CD14-positive monocyte (primary cell): ENCODE measurements at regions of chr18 and their contacts with region 1.

Region 1: DNA sequence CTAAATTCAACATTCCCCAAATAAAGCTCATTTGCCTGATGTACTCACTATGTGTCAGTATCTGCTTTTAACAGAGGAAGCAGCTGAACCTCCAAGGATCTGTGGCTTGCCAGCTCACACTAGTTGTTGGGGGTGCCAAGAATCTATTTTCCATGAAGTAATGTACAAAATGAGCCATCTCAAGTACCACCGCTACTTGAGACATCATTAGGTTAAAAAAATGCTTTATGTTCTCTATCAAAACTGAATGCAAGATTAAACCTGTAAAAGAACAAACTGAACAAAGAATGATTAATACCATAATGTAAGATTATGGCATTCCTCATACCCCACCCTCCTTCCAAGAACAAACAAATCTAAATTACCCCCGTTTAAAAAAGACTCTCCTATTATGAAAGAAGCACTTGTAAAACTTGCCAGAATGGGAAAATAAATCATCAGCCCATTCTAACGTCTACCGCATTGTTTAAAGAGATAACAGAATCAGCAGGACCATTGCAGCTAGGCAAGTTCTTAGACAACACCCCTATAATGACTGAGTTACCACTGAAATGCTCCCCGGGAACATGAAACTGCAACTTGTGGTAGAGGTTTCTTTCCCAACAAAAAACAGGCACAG is 471.6 kb downstream of the DLGAP1 start:
- DNase-seq: no peak
- H3K4me3 ChIP-seq: no peak overlapping the region
- H3K4me3 Mint-ChIP-seq: no peak overlapping the region
- H3K27ac ChIP-seq: no peak overlapping the region
- H3K27ac Mint-ChIP-seq: no peak overlapping the region
- H3K4me1 ChIP-seq: no peaks in the 10 kb centered on the region
- H3K4me1 Mint-ChIP-seq: peaks cover 5% of the 10 kb centered on the region
- H3K27me3 ChIP-seq: no peaks in the 10 kb centered on the region
- H3K27me3 Mint-ChIP-seq: peaks cover 0 to 3% (median 3%) of the 10 kb centered on the region in 3 donors
- CTCF ChIP-seq: no peak

Region 2: GRCh38 chr18:3585656-3586509 is 397.6 kb before region 1 on chr18:
- intact Hi-C with region 1: no loop called
- DNase-seq: peak; percentile 71 to 83 (median 83)
- H3K4me3 ChIP-seq: no peak overlapping the region
- H3K4me3 Mint-ChIP-seq: no peak overlapping the region
- H3K27ac ChIP-seq: no peak overlapping the region
- H3K27ac Mint-ChIP-seq: peak overlapping the region in 2 of 7 donors; percentile 1 to 46
- H3K4me1 ChIP-seq: peaks cover 5 to 14% of the 10 kb centered on the region in 2 donors
- H3K4me1 Mint-ChIP-seq: peaks cover 19% of the 10 kb centered on the region
- H3K27me3 ChIP-seq: no peaks in the 10 kb centered on the region
- H3K27me3 Mint-ChIP-seq: peaks cover 0 to 4% (median 4%) of the 10 kb centered on the region in 3 donors
- CTCF ChIP-seq: peak; percentile 86

Region 3: DNA sequence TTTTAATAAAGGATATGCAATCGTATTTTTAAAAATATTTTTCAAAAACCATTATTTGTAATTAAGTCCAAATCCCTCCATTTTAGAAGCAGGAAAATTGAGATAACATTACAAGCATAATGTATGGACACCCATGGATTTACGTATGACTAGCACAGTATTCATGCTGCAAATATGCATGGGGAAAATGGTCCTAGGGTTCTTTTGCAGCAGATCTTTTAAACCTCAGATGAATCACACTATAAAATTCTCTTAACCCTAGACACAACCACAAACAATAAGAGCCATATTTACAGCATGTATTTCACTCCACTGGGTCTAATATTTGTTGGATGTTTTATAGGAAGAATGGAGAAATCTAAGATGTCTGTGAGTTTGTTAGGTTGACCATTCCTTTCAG is 80.1 kb before region 1 on chr18:
- intact Hi-C with region 1: loop called in 1 of 2 experiments (anchors 10 kb)
- DNase-seq: no peak
- H3K4me3 ChIP-seq: no peak overlapping the region
- H3K4me3 Mint-ChIP-seq: no peak overlapping the region
- H3K27ac ChIP-seq: no peak overlapping the region
- H3K27ac Mint-ChIP-seq: no peak overlapping the region
- H3K4me1 ChIP-seq: peaks cover 11% of the 10 kb centered on the region in 2 donors
- H3K4me1 Mint-ChIP-seq: peaks cover 5% of the 10 kb centered on the region
- H3K27me3 ChIP-seq: no peaks in the 10 kb centered on the region
- H3K27me3 Mint-ChIP-seq: peaks cover 6 to 10% (median 6%) of the 10 kb centered on the region in 3 donors
- CTCF ChIP-seq: no peak